ENCODE measurements at regions of chr1 and their contacts with region 1.

Region 1: GRCh38 chr1:11907275-11908094 is 18.7 kb downstream of the KIAA2013 start:
- DNase-seq: peak; percentile 79 to 94
- ATAC-seq: peak; percentile 69 to 76
- H3K4me3 ChIP-seq: peak overlapping the region; percentile 60; the same call in 1 of the 3 replicates
- H3K27ac ChIP-seq: peak overlapping the region; percentile 96 to 99
- H3K4me1 ChIP-seq: peaks cover 4% of the 10 kb centered on the region; the same call in 1 of the 3 replicates
- CTCF ChIP-seq: 0 out of 3 replicates have a peak, but pooled peaks have one; percentile 13
- EP300 ChIP-seq: no peak
- POLR2A ChIP-seq: no peak
- RAD21 ChIP-seq: peak in 1 of 2 experiments; percentile 18; a peak in 1 of 5 replicates

Region 2: GRCh38 chr1:11781298-11781697 is 126.2 kb before region 1 on chr1:
- CTCF ChIA-PET with region 1: no interaction called
- POLR2A ChIA-PET with region 1: no interaction called
- DNase-seq: no peak
- ATAC-seq: no peak
- H3K4me3 ChIP-seq: no peak overlapping the region
- H3K27ac ChIP-seq: no peak overlapping the region
- H3K4me1 ChIP-seq: no peaks in the 10 kb centered on the region
- CTCF ChIP-seq: no peak
- EP300 ChIP-seq: no peak
- POLR2A ChIP-seq: no peak
- RAD21 ChIP-seq: no peak

Region 3: DNA sequence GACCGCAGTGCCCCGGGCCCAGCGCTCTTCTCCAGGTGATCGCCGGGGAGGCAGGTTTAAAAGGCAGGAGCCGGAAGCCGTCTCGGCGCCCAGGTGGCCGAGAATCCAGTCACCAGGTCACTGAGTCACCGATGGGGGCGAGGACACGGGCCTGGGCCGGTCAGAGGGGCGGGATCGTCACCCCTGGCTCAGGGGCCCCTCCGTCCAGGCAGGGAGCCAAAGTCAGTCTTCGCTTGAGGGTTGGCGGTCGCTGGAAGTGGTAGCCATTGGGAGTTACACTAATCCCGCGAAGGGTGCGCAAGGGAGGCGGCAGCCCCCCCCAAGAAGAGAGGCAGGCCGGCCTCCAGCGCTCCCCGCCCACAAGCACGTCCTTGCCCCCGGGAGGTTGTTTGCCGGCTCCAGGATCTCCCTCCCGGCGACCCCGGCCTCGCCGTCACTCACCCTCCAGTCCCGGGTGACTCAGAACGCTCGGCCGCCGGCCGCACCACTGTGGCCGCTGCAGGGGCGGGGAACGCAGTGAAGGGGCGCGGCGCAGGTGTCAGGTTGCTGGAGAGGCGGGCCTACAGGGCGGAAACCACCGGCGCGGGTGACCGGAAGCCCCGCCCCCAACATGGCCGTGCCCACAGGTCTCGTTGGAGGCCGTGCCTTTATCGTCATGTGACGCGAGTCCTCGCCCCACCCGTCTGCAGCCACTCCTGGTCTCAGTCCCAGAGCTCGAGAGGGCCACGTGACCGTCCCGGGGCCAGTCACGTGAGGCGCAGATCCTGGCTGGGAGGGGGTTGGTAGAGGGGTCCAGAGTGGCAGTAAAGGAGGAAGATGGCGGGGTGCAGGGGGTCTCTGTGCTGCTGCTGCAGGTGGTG is 101.8 kb before region 1 on chr1 and contains the starts of genes CLCN6 and MTHFR:
- CTCF ChIA-PET with region 1: no interaction called
- POLR2A ChIA-PET with region 1: interaction called, 23 read pairs
- DNase-seq: peak; percentile 96 to 98
- ATAC-seq: peak; percentile 94 to 97
- H3K4me3 ChIP-seq: peak within 1 kb of the TSS; percentile 59
- H3K27ac ChIP-seq: peak within 1 kb of the TSS; percentile 91 to 95
- H3K4me1 ChIP-seq: peaks cover 26% of the 10 kb centered on the region
- CTCF ChIP-seq: no peak
- EP300 ChIP-seq: no peak
- POLR2A ChIP-seq: peak; percentile 38
- RAD21 ChIP-seq: no peak
- polyA plus RNA-seq, gene CLCN6: 5.7 and 8.2 TPM in 2 replicates
- polyA plus RNA-seq, gene MTHFR: 4.5 and 5.0 TPM in 2 replicates

Region 4: DNA sequence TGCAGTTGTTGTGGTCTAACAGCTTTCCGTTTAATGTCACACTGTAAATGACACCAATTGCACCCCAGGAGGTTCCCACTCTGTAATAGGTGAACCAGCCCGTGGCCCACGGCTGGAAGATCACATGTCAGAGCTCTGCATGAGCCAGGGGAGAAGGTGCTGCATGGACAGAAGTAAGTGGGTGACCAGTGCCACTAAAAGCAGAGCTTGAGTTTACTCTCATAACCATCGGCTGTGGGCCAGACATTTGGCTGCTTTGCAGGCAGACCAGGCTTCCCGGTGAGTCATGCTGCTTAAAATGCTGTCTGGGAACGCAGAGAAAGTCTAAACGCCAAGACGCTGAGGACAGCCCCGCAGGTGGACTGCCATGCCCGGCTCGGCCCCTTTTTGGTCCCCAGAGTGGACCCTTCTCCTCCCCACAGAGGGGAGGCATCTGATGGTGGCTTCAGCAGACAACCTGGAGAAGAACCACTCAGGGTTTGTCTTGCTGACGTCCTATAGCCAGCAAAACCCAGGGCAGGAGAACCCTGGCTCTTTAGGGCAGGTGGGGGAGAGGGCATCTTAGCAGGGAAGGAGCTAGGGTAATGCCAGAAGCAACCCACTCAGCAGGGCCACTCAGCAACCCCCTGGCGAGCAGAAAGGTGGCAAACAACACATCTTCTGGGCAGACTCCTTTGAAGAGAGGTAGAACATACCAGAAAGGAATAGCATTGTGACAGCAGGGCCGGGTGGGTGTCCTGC is 11.5 kb after region 1 on chr1:
- CTCF ChIA-PET with region 1: no interaction called
- POLR2A ChIA-PET with region 1: interaction called, 66 read pairs
- DNase-seq: peak in 1 of 2 experiments; percentile 37
- ATAC-seq: peak; percentile 80 to 85
- H3K4me3 ChIP-seq: no peak overlapping the region
- H3K27ac ChIP-seq: peak overlapping the region; percentile 18 to 69; a peak in 3 of 6 replicates
- H3K4me1 ChIP-seq: peaks cover 13% of the 10 kb centered on the region; the same call in 2 of the 3 replicates
- CTCF ChIP-seq: no peak
- EP300 ChIP-seq: no peak
- POLR2A ChIP-seq: no peak
- RAD21 ChIP-seq: no peak

Region 5: GRCh38 chr1:11934302-11935056 is 27.0 kb after region 1 on chr1 and contains the start of gene PLOD1:
- CTCF ChIA-PET with region 1: no interaction called
- POLR2A ChIA-PET with region 1: interaction called, 13 read pairs
- DNase-seq: peak; percentile 69 to 83
- ATAC-seq: peak; percentile 95 to 98
- H3K4me3 ChIP-seq: peak within 1 kb of the TSS; percentile 52
- H3K27ac ChIP-seq: peak within 1 kb of the TSS; percentile 86 to 88
- H3K4me1 ChIP-seq: peaks cover 26% of the 10 kb centered on the region
- CTCF ChIP-seq: no peak
- EP300 ChIP-seq: no peak
- POLR2A ChIP-seq: peak; percentile 85
- RAD21 ChIP-seq: no peak
- polyA plus RNA-seq, gene PLOD1: 53.8 and 66.7 TPM in 2 replicates

Region 6: DNA sequence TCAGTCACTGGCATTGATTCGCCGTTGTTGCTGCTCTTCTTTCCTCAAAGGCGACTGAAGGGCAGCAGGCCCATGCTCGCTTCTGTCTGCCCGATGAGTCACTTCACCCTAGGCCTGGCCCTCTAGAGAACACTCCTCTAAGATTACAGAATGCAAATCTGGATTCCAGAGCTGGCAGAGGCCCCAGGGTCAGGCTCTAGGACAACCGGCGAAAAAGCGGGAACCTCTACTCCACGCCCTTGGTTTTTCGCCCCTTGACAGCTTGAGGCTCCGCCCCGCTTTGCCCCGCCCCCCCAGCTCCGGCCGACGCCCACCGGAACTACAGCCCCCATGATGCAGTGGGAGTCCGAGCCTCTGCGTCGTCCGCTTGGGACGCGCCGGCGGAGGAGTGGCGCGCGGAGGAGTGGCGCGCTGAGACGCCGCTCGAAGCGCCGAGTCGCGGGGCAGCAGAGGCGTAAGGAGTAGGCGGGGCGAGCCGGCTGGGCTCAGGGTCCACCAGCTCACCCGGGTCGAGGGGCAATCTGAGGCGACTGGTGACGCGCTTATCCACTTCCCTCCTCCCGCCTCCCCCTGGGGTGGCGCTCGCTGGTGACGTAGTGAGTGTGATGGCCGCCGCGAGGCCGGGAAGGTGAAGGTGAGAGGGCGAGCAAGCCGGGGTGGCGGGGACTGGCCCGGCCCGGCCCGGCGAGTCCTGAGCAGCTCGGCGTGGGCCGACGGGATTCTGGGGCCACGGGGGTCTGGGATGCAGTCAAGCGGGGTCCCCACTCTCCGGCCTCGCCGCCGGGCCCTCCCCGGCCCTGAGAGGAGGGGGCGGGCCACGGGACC is 72.6 kb after region 1 on chr1 and contains the start of gene MFN2:
- CTCF ChIA-PET with region 1: interaction called, 5 read pairs
- POLR2A ChIA-PET with region 1: interaction called, 45 read pairs
- DNase-seq: peak; percentile 92 to 94
- ATAC-seq: peak; percentile 94 to 96
- H3K4me3 ChIP-seq: peak within 1 kb of the TSS; percentile 98
- H3K27ac ChIP-seq: peak within 1 kb of the TSS; percentile 95 to 97
- H3K4me1 ChIP-seq: peaks cover 20% of the 10 kb centered on the region
- CTCF ChIP-seq: no peak
- EP300 ChIP-seq: no peak
- POLR2A ChIP-seq: peak; percentile 54
- RAD21 ChIP-seq: no peak
- polyA plus RNA-seq, gene MFN2: 34.7 and 40.3 TPM in 2 replicates

Measured in A549 (cell line).